ENCODE measurements at regions of chr1 and their contacts with region 1.

Region 1: DNA sequence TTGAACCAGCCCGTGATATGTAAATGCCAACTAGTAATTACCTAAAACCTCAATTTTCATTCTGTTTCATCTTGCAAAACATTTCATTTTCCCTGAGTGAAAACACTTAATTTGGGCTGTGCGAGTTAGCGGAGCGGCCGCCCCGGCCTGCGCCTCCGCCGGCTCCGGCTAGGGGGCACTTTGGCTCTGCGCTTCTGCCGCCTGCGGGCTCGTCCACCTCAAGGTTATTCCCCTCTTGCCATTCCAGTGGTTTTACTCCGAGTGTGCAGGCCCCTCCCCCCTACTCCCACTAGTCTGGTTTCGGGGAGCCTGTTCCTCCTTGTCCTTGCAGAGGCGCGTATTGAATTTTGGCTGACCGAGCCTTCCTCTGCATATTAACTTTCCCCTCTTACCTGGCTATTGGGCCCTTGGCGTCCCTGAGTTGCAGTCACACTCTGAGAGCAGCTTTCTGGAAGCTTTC is 55.6 kb downstream of the PEX14 start:
- DNase-seq: peak; percentile 79
- ATAC-seq: peak; percentile 83
- H3K4me3 ChIP-seq: peak overlapping the region; percentile 26; the same call in 1 of the 2 replicates
- H3K27ac ChIP-seq: peak overlapping the region; percentile 36
- H3K4me1 ChIP-seq: peaks cover 20% of the 10 kb centered on the region
- H3K27me3 ChIP-seq: no peaks in the 10 kb centered on the region
- CTCF ChIP-seq: peak; percentile 94
- POLR2A ChIP-seq: peak; percentile 56; the same call in 1 of the 2 replicates
- RAD21 ChIP-seq: peak; percentile 95

Region 2: GRCh38 chr1:10598389-10598702 is 68.0 kb after region 1 on chr1:
- CTCF ChIA-PET with region 1: no interaction called
- POLR2A ChIA-PET with region 1: no interaction called
- dilution Hi-C with region 1: no loop called
- in situ Hi-C with region 1: no loop called
- intact Hi-C with region 1: loop called (anchors 2 kb)
- DNase-seq: no peak
- ATAC-seq: no peak
- H3K4me3 ChIP-seq: no peak overlapping the region
- H3K27ac ChIP-seq: no peak overlapping the region
- H3K4me1 ChIP-seq: peaks cover 19% of the 10 kb centered on the region
- H3K27me3 ChIP-seq: no peaks in the 10 kb centered on the region
- CTCF ChIP-seq: no peak
- POLR2A ChIP-seq: no peak
- RAD21 ChIP-seq: no peak

Region 3: GRCh38 chr1:10694633-10695627 is 164.6 kb after region 1 on chr1:
- CTCF ChIA-PET with region 1: no interaction called
- POLR2A ChIA-PET with region 1: no interaction called
- dilution Hi-C with region 1: no loop called
- in situ Hi-C with region 1: loop called (anchors 10 kb)
- intact Hi-C with region 1: loop called (anchors 1 kb)
- DNase-seq: peak; percentile 74
- ATAC-seq: peak; percentile 94
- H3K4me3 ChIP-seq: peak overlapping the region; percentile 67
- H3K27ac ChIP-seq: no peak overlapping the region
- H3K4me1 ChIP-seq: no peaks in the 10 kb centered on the region; the same call in 1 of the 2 replicates
- H3K27me3 ChIP-seq: peaks cover 32% of the 10 kb centered on the region
- CTCF ChIP-seq: no peak
- POLR2A ChIP-seq: no peak
- RAD21 ChIP-seq: no peak

Region 4: DNA sequence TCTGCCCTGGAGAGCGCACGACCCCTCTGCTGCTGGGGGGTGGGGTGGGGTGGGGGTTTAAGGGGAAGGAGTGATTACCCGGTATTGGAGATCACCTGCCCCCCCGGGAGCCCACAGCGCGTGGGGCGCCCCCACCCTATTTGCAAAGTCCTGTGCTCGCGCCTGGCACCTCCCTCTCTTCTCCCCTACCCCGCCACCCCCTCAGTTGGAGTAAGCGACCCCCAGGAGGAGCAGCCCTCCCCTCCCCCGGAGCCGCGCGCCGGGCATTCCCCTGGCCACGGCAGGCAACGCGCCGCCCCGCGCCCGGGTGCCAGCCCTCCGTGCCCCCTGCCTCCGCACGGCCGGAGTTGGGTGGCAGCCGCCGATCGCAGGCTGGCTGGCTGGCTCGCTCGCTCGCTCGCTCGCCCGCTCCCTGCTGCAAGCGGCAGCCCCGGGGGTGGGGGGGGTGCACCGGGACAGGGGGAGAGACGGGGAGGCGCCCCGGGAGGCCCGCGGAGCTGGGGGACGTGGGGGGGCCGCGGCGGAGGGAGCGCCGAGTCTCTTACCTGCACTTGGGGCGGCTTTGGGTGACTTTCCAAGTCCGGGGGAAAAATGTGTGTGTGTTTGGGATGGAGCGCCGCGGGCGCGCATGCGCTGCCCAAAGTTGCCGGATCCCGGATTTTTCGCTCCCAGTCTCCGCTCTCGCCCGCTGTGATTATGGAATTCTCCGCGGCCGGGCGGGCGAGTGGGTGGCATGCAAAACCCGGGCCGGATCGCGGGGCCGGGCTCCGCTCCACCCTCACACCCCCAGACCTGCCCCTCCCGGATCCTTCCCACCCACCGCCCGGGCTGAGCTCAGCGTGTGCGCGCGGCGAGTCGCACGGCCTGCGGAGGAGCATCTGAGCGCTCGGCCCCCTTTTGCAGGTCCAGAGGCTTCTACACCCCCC is 266.0 kb after region 1 on chr1 and contains the start of gene CASZ1:
- CTCF ChIA-PET with region 1: no interaction called
- POLR2A ChIA-PET with region 1: no interaction called
- dilution Hi-C with region 1: no loop called
- in situ Hi-C with region 1: no loop called
- intact Hi-C with region 1: loop called (anchors 10 kb)
- DNase-seq: peak; percentile 86
- ATAC-seq: peak; percentile 94
- H3K4me3 ChIP-seq: peak within 1 kb of the TSS; percentile 34
- H3K27ac ChIP-seq: no peak within 1 kb of the TSS
- H3K4me1 ChIP-seq: peaks cover 4% of the 10 kb centered on the region; the same call in 1 of the 2 replicates
- H3K27me3 ChIP-seq: peaks cover 62% of the 10 kb centered on the region
- CTCF ChIP-seq: no peak
- POLR2A ChIP-seq: no peak
- RAD21 ChIP-seq: no peak
- total RNA-seq, gene CASZ1: under 0.01 and 0.18 TPM in 2 replicates

Region 5: GRCh38 chr1:10867138-10867721 is 336.9 kb after region 1 on chr1:
- CTCF ChIA-PET with region 1: interaction called, 4 read pairs
- POLR2A ChIA-PET with region 1: no interaction called
- dilution Hi-C with region 1: no loop called
- in situ Hi-C with region 1: no loop called
- intact Hi-C with region 1: loop called (anchors 1 kb)
- DNase-seq: peak; percentile 18
- ATAC-seq: peak; percentile 98
- H3K4me3 ChIP-seq: peak overlapping the region; percentile 36
- H3K27ac ChIP-seq: no peak overlapping the region; the same call in 1 of the 2 replicates
- H3K4me1 ChIP-seq: peaks cover 7% of the 10 kb centered on the region
- H3K27me3 ChIP-seq: peaks cover 60% of the 10 kb centered on the region
- CTCF ChIP-seq: peak; percentile 87
- POLR2A ChIP-seq: no peak; the same call in 1 of the 2 replicates
- RAD21 ChIP-seq: peak; percentile 81

Region 6: GRCh38 chr1:11012250-11013171 is 482.2 kb after region 1 on chr1 and contains the start of gene TARDBP:
- CTCF ChIA-PET with region 1: no interaction called
- POLR2A ChIA-PET with region 1: no interaction called
- dilution Hi-C with region 1: no loop called
- in situ Hi-C with region 1: no loop called
- intact Hi-C with region 1: loop called (anchors 5 kb)
- DNase-seq: peak; percentile 83
- ATAC-seq: peak; percentile 94
- H3K4me3 ChIP-seq: peak within 1 kb of the TSS; percentile 89
- H3K27ac ChIP-seq: peak within 1 kb of the TSS; percentile 99
- H3K4me1 ChIP-seq: peaks cover 2% of the 10 kb centered on the region; the same call in 1 of the 2 replicates
- H3K27me3 ChIP-seq: no peaks in the 10 kb centered on the region
- CTCF ChIP-seq: no peak
- POLR2A ChIP-seq: peak; percentile 96
- RAD21 ChIP-seq: no peak
- total RNA-seq, gene TARDBP: 36.7 and 98.0 TPM in 2 replicates